Adrenal gland (tissue), 19 donors: ENCODE measurements at regions of chr6 and their contacts with region 1.

Region 1: DNA sequence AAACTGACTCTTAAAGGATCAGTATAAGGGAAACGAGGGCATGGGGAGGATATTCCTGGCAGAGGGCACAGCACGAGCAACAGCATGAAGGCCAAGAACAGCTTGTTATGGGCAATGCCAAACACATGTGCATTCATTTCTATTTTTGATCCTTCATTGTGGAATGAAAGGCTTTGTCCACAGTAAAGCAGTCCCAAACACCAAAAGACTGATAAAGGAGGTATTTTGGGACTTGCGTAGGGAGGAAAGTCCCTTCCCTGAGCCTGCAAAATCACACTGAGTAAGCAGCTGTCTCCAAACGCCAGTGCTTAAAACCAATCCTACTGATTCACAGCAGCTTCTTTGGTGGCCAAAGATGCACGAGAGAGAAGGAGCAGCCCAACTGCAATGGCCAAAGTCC is 138.2 kb downstream of the UNC5CL start:
- DNase-seq: no peak
- H3K4me3 ChIP-seq: no peak overlapping the region
- H3K27ac ChIP-seq: no peak overlapping the region
- H3K4me1 ChIP-seq: peaks cover 0 to 12% of the 10 kb centered on the region in 2 donors
- H3K27me3 ChIP-seq: no peaks in the 10 kb centered on the region
- CTCF ChIP-seq: no peak
- POLR2A ChIP-seq: no peak

Region 2: GRCh38 chr6:40882323-40882997 is 18.3 kb before region 1 on chr6:
- intact Hi-C with region 1: no loop called
- DNase-seq: peak in 5 of 7 donors; percentile 13 to 59 (median 29)
- H3K4me3 ChIP-seq: no peak overlapping the region
- H3K27ac ChIP-seq: no peak overlapping the region
- H3K4me1 ChIP-seq: no peaks in the 10 kb centered on the region
- H3K27me3 ChIP-seq: no peaks in the 10 kb centered on the region
- CTCF ChIP-seq: no peak
- POLR2A ChIP-seq: no peak

Region 3: DNA sequence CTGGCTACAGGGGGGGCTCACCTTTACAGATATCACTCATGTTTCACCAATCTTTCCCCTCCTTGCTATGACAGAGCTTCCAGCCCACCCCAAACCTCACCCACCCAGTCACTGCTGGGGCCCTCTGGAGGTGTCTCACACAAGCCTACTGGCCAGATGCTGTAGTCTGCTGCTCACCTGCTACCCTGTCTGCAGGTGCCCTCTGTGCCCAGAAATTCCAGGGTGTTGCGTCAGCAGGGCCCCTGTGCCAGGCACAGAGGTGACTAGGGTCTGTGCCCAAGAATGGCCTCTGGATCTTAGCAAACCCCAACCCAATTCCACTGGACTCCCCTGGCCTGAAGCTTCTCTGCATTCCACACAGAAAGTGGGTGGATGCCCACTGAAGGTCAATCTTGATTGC is 116.9 kb after region 1 on chr6:
- intact Hi-C with region 1: loop called in 1 of 2 experiments (anchors 5 kb)
- DNase-seq: no peak
- H3K4me3 ChIP-seq: no peak overlapping the region
- H3K27ac ChIP-seq: no peak overlapping the region
- H3K4me1 ChIP-seq: peaks cover 0 to 14% of the 10 kb centered on the region in 2 donors
- H3K27me3 ChIP-seq: no peaks in the 10 kb centered on the region
- CTCF ChIP-seq: no peak
- POLR2A ChIP-seq: no peak

Region 4: GRCh38 chr6:41080621-41081020 is 179.8 kb after region 1 on chr6:
- intact Hi-C with region 1: no loop called
- DNase-seq: no peak
- H3K4me3 ChIP-seq: no peak overlapping the region
- H3K27ac ChIP-seq: no peak overlapping the region
- H3K4me1 ChIP-seq: no peaks in the 10 kb centered on the region
- H3K27me3 ChIP-seq: no peaks in the 10 kb centered on the region
- CTCF ChIP-seq: no peak
- POLR2A ChIP-seq: no peak